ENCODE measurements at regions of chr5 and their contacts with region 1.

Region 1: DNA sequence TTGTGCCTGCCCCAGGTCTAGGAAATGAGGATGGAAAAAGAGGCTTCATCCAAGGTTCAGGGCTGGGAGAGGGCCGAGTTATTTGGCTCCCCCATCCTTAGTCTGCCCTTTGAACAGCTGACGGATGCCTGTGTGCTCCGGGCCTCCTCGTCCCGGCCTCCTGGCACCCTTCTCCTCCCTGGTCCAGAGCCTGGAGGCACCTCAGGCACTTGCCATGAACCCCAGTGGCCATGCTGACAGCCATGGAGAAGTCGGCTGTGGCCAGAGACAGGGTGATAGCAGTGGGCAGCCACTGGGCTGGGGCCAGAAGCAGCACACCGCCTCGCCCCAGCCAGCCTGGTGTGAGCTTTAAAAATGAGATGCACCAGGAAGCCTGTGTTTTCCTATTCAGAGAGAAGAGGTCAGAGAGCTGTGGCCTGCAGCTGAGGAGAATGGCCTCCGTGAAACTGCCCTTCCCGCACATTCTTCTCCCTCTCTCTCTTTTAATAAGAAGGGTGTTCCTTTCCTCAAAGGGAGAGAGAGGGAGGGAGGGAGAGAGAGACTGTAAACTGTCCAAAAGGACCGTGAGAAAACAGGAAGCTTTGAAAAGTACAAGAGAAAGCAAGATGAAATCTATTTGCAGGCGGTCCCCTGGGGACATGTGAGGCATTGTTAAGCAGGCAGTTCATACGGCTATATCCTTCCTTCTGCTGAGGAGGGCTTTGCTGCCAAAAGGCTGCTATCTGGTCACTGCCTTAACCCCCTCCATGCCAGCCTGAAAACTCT is 55.3 kb downstream of the ZNF366 start:
- DNase-seq: peak in 1 of 2 donors; percentile 90
- H3K4me3 ChIP-seq: no peak overlapping the region
- H3K27ac ChIP-seq: peak overlapping the region; percentile 96 to 98
- H3K4me1 ChIP-seq: peaks cover 13 to 30% of the 10 kb centered on the region in 2 donors
- H3K27me3 ChIP-seq: no peaks in the 10 kb centered on the region
- CTCF ChIP-seq: no peak

Region 2: GRCh38 chr5:72402959-72403628 is 48.8 kb before region 1 on chr5:
- intact Hi-C with region 1: loop called (anchors 2 kb)
- DNase-seq: peak in 1 of 2 donors; percentile 88
- H3K4me3 ChIP-seq: no peak overlapping the region
- H3K27ac ChIP-seq: peak overlapping the region; percentile 75 to 77
- H3K4me1 ChIP-seq: peaks cover 0 to 11% of the 10 kb centered on the region in 2 donors
- H3K27me3 ChIP-seq: no peaks in the 10 kb centered on the region
- CTCF ChIP-seq: peak in 2 of 3 experiments; percentile 27 to 35

Region 3: GRCh38 chr5:72434781-72435437 is 17.0 kb before region 1 on chr5:
- intact Hi-C with region 1: loop called (anchors 1 kb)
- DNase-seq: no peak
- H3K4me3 ChIP-seq: no peak overlapping the region
- H3K27ac ChIP-seq: peak overlapping the region; percentile 83 to 87
- H3K4me1 ChIP-seq: peaks cover 18 to 53% of the 10 kb centered on the region in 2 donors
- H3K27me3 ChIP-seq: no peaks in the 10 kb centered on the region
- CTCF ChIP-seq: no peak

Region 4: DNA sequence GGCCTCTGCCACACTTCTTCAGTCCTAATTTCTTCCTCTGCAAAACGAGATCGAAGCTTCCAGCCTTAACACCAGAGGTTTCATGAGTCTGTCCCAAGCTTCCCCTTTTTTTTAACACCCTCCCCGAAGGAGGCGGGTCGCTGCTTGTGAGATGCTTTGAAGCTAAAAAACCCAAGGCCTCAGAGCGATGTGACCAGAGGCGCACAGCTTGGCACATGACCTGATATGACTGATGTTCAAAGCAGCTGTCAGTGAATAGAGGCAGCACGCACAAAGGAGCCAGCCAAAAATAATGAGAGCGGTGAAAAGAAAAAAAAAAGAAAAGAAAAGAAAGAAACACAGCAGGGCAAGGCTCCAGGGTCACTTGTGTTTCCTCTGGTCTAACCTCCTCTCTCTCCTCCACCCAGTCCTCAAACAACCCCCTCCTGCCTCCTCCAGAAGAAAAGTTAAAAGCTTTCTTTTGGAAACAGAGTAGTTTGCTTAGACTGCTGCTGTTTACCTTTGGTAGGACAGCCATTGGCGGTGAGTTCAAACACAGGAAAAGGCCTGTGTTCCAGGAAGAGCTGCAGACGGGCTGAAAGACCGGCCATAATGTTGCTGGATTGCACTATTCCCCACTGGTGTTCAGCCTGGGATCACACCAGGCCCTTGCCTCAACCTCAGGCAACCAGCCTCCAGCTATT is 66.2 kb after region 1 on chr5:
- intact Hi-C with region 1: loop called (anchors 2 kb)
- DNase-seq: peak; percentile 45 to 84
- H3K4me3 ChIP-seq: no peak overlapping the region
- H3K27ac ChIP-seq: peak overlapping the region; percentile 62 to 73
- H3K4me1 ChIP-seq: peaks cover 0 to 13% of the 10 kb centered on the region in 2 donors
- H3K27me3 ChIP-seq: no peaks in the 10 kb centered on the region
- CTCF ChIP-seq: no peak